Vagina (tissue), 2 donors: ENCODE measurements at regions of chr11 and their contacts with region 1.

Region 1: DNA sequence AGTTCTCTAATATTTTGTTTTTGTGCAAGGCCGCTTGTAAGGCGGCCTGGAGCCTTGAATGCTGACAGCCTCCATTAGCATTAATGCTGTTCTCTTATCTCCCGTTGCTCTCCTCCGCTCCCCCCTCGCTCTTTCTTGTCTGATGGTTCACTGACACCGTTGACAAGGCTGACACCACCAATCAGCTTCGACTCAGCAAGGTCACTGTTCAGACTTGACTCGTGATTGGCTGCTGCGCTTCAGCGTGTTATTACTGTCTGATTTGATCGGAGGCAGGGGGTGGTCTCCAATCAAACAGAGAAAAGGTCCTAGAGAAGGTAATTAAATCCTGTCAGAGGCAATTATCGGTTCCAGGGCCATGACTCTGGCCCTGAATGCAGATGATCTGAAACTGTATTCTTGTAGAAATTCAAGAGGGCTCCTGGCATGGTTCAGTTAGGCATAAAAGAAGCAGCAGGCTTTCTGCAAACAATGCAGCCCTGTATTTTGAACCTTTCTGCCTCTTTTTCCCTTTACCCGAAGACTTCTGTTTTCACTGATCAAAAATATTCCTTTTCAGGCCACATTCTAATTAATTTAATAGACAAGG is 49.3 kb upstream of the MPPED2 start:
- DNase-seq: no peak
- H3K4me3 ChIP-seq: no peak overlapping the region
- H3K27ac ChIP-seq: no peak overlapping the region
- H3K4me1 ChIP-seq: no peaks in the 10 kb centered on the region
- H3K27me3 ChIP-seq: no peaks in the 10 kb centered on the region
- CTCF ChIP-seq: no peak
- POLR2A ChIP-seq: no peak

Region 2: DNA sequence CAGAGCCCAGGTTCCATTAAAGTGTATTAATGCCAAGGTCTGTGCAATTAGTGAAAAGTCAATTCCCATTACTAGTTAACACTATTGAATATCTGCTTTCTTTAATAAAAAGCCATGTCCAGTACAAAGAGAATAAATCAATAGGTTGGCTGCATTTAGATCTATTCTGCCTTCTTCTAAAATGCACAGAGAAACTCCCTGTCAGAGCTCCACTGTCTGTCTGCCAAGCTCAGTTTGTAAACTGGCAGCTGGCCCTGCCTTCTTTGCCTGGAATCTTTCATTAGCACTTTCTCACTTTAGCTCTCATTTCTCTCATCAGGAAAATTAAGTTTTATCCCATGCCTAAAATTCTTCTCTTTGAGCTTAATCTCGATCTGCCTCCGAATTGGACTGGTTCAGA is 277.0 kb before region 1 on chr11:
- intact Hi-C with region 1: loop called (anchors 10 kb)
- DNase-seq: no peak
- H3K4me3 ChIP-seq: no peak overlapping the region
- H3K27ac ChIP-seq: no peak overlapping the region
- H3K4me1 ChIP-seq: no peaks in the 10 kb centered on the region
- H3K27me3 ChIP-seq: no peaks in the 10 kb centered on the region
- CTCF ChIP-seq: no peak
- POLR2A ChIP-seq: no peak

Region 3: GRCh38 chr11:30653606-30654005 is 18.1 kb after region 1 on chr11:
- intact Hi-C with region 1: no loop called
- DNase-seq: no peak
- H3K4me3 ChIP-seq: no peak overlapping the region
- H3K27ac ChIP-seq: no peak overlapping the region
- H3K4me1 ChIP-seq: no peaks in the 10 kb centered on the region
- H3K27me3 ChIP-seq: no peaks in the 10 kb centered on the region
- CTCF ChIP-seq: no peak
- POLR2A ChIP-seq: no peak